Cardiac septum (tissue), 1 donor: ENCODE measurements at regions of chr3 and their contacts with region 1.

Region 1: GRCh38 chr3:196711838-196712513 is at the starts of genes CEP19 and PIGX:
- DNase-seq: peak; percentile 96
- total RNA-seq, gene CEP19: 1.2 TPM
- total RNA-seq, gene PIGX: 16.9 TPM

Region 2: GRCh38 chr3:196739671-196740480 is 27.9 kb after region 1 on chr3 and contains the start of gene PAK2:
- intact Hi-C with region 1: loop called (anchors 1 kb)
- DNase-seq: peak; percentile 98
- total RNA-seq, gene PAK2: 43.3 TPM

Region 3: DNA sequence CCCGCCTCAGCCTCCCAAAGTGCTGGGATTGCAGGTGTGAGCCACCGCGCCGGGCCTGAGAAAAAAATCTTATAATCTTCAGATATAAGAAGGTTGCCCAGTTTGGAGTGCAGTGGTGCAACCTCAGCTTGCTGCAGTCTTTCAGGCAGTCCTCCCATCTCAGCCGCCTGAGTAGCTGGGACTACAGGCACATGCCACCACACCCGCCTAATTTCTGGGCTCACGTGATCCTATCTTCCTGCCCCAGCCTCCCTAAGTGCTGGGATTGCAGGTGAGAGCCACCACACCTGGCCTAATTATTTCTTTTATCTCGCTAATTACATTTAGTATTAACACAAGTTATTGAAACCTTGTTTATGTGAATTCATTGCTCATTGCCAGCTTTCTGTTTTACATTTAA is 41.2 kb after region 1 on chr3:
- intact Hi-C with region 1: no loop called
- DNase-seq: no peak

Region 4: GRCh38 chr3:196763179-196763822 is 51.3 kb after region 1 on chr3:
- intact Hi-C with region 1: no loop called
- DNase-seq: no peak